Cardiac septum (tissue), 1 donor: ENCODE measurements at regions of chr5 and their contacts with region 1.

Region 1: GRCh38 chr5:158429542-158429941 is 570.6 kb upstream of the CLINT1 start:
- DNase-seq: no peak

Region 2: GRCh38 chr5:157718519-157718918 is 711.0 kb before region 1 on chr5:
- intact Hi-C with region 1: no loop called
- DNase-seq: no peak

Region 3: GRCh38 chr5:158484150-158484549 is 54.6 kb after region 1 on chr5:
- intact Hi-C with region 1: loop called (anchors 5 kb)
- DNase-seq: no peak

Region 4: DNA sequence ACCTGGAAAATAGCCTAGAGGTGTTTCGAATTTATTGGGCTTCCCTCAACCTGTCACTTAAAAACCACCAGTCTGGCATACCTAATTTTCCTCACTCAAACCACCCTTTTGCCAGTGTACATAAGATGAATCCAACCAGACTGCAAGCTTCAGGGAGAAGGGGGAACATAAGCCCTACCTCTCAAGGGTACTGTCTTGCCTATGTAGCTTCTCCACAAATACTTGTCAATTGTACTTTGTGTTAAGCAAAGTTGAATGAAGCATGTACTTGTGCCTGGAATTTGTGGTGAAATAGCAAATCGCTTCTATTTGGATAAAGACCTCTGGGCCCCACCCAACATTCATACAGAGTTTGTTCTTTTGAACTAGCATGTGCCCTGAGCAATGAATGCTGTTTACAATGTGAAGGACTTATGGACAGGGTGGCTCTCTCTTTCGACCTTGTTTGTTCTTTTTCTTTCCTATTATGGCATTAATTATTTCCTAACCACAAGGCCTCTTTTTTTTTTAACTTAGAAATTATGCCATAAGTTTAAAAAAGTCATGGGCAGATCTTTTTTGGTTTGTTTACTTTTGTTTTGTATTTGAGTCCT is 90.0 kb after region 1 on chr5:
- intact Hi-C with region 1: loop called (anchors 5 kb)
- DNase-seq: no peak

Region 5: GRCh38 chr5:158875272-158875679 is 445.7 kb after region 1 on chr5:
- intact Hi-C with region 1: no loop called
- DNase-seq: no peak